Left colon (tissue), 2 donors: ENCODE measurements at regions of chr16 and their contacts with region 1.

Region 1: GRCh38 chr16:14135290-14135689 is 64.2 kb downstream of the MRTFB start:
- DNase-seq: no peak
- ATAC-seq: no peak

Region 2: GRCh38 chr16:14007450-14007849 is 127.8 kb before region 1 on chr16:
- intact Hi-C with region 1: loop called in 1 of 2 experiments (anchors 5 kb)
- DNase-seq: no peak
- ATAC-seq: no peak